ENCODE measurements at regions of chr14 and their contacts with region 1.

Region 1: GRCh38 chr14:74249433-74250375 is 10.5 kb downstream of the VSX2 start:
- DNase-seq: no peak
- ATAC-seq: no peak
- H3K4me3 ChIP-seq: no peak overlapping the region
- H3K4me3 Mint-ChIP-seq: no peak overlapping the region
- H3K27ac ChIP-seq: no peak overlapping the region
- H3K27ac Mint-ChIP-seq: no peak overlapping the region
- H3K4me1 ChIP-seq: peaks cover 6 to 7% of the 10 kb centered on the region in 2 donors
- H3K4me1 Mint-ChIP-seq: peaks cover 8% of the 10 kb centered on the region
- H3K27me3 ChIP-seq: peaks cover 0 to 42% (median 13%) of the 10 kb centered on the region in 4 experiments
- H3K27me3 Mint-ChIP-seq: peaks cover 50% of the 10 kb centered on the region
- CTCF ChIP-seq: no peak

Region 2: GRCh38 chr14:74109369-74109768 is 140.3 kb before region 1 on chr14:
- CTCF ChIA-PET with region 1: interaction called, 16 read pairs
- POLR2A ChIA-PET with region 1: interaction called, 4 read pairs
- intact Hi-C with region 1: no loop called
- DNase-seq: no peak
- ATAC-seq: no peak
- H3K4me3 ChIP-seq: no peak overlapping the region
- H3K4me3 Mint-ChIP-seq: no peak overlapping the region
- H3K27ac ChIP-seq: no peak overlapping the region
- H3K27ac Mint-ChIP-seq: no peak overlapping the region
- H3K4me1 ChIP-seq: no peaks in the 10 kb centered on the region
- H3K4me1 Mint-ChIP-seq: no peaks in the 10 kb centered on the region
- H3K27me3 ChIP-seq: no peaks in the 10 kb centered on the region
- H3K27me3 Mint-ChIP-seq: no peaks in the 10 kb centered on the region
- CTCF ChIP-seq: no peak

Region 3: GRCh38 chr14:74217672-74218448 is 31.8 kb before region 1 on chr14:
- CTCF ChIA-PET with region 1: interaction called, 6 read pairs
- POLR2A ChIA-PET with region 1: no interaction called
- intact Hi-C with region 1: loop called (anchors 1 kb)
- DNase-seq: peak; percentile 81
- ATAC-seq: peak; percentile 89
- H3K4me3 ChIP-seq: peak overlapping the region in 2 of 5 experiments; percentile 15 to 26
- H3K4me3 Mint-ChIP-seq: peak overlapping the region; percentile 67
- H3K27ac ChIP-seq: no peak overlapping the region
- H3K27ac Mint-ChIP-seq: no peak overlapping the region
- H3K4me1 ChIP-seq: peaks cover 5 to 7% of the 10 kb centered on the region in 2 donors
- H3K4me1 Mint-ChIP-seq: peaks cover 2% of the 10 kb centered on the region
- H3K27me3 ChIP-seq: peaks cover 0 to 18% (median 6%) of the 10 kb centered on the region in 4 experiments
- H3K27me3 Mint-ChIP-seq: peaks cover 32% of the 10 kb centered on the region
- CTCF ChIP-seq: peak; percentile 90

Region 4: GRCh38 chr14:74459289-74459946 is 209.7 kb after region 1 on chr14:
- CTCF ChIA-PET with region 1: no interaction called
- POLR2A ChIA-PET with region 1: no interaction called
- intact Hi-C with region 1: no loop called
- DNase-seq: peak; percentile 27
- ATAC-seq: peak; percentile 62
- H3K4me3 ChIP-seq: no peak overlapping the region
- H3K4me3 Mint-ChIP-seq: no peak overlapping the region
- H3K27ac ChIP-seq: no peak overlapping the region
- H3K27ac Mint-ChIP-seq: no peak overlapping the region
- H3K4me1 ChIP-seq: no peaks in the 10 kb centered on the region
- H3K4me1 Mint-ChIP-seq: no peaks in the 10 kb centered on the region
- H3K27me3 ChIP-seq: no peaks in the 10 kb centered on the region
- H3K27me3 Mint-ChIP-seq: peaks cover 30% of the 10 kb centered on the region
- CTCF ChIP-seq: peak; percentile 66